MCF 10A (cell line): ENCODE measurements at regions of chrX and their contacts with region 1.

Region 1: GRCh38 chrX:78517124-78517523 is 142.0 kb downstream of the RTL3 start:
- DNase-seq: no peak
- H3K4me3 Mint-ChIP-seq: no peak overlapping the region
- H3K27ac Mint-ChIP-seq: no peak overlapping the region
- H3K4me1 Mint-ChIP-seq: no peaks in the 10 kb centered on the region
- H3K27me3 Mint-ChIP-seq: no peaks in the 10 kb centered on the region
- CTCF ChIP-seq: no peak

Region 2: DNA sequence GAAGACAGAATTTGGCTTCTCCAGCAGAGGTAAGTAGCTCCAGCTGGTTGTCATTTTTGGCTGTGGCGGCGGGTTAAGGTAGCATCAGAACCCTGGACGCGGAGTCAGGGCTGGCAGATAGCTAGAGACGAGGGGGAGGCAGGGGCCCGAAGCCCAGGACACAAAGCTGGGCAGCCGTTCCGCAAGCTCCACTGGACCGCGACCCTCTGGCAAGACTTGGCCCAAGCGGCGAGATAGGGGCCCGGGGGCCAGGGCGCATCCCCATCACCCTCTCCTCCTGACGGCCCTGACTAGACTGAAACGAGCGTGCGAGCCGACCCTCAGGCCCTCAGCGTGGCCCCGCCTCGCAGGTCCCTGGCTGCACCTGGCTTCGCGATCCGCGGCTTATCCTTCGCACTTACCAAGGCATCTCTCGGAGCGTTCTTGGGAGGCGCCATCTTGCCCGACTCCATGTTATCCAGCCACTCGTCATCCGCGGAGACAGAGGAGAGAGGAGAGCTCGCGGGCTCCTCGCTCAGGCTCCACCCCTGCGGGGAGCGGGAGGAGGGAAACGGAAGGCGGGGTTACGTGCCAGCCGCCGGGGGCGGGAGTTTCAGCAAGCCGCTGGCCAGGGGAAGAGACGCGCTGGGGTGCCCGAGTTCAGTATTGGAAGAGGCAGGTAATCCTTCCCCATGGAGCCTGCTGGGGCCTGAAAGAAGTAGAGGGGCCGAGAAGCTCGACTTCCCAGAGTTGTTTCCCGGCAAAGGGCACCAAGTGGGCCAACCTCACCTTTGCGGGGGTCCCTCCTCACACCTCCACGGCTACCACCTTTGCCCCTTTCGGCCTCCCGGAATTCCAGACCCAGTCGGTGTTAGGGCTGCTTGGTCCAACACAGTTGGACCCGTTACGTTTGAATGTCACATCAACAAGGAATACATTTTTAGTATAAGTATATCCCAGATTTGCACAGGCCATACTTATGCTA is 377.7 kb before region 1 on chrX and contains the start of gene TAF9B:
- CTCF ChIA-PET with region 1: no interaction called
- POLR2A ChIA-PET with region 1: interaction called, 3 read pairs
- intact Hi-C with region 1: loop called (anchors 10 kb)
- DNase-seq: peak; percentile 84
- H3K4me3 Mint-ChIP-seq: peak within 1 kb of the TSS; percentile 81
- H3K27ac Mint-ChIP-seq: peak within 1 kb of the TSS; percentile 63
- H3K4me1 Mint-ChIP-seq: no peaks in the 10 kb centered on the region
- H3K27me3 Mint-ChIP-seq: no peaks in the 10 kb centered on the region
- CTCF ChIP-seq: no peak
- total RNA-seq, gene TAF9B: 11.8 and 14.1 TPM in 2 replicates

Region 3: GRCh38 chrX:78532363-78532762 is 15.2 kb after region 1 on chrX:
- CTCF ChIA-PET with region 1: no interaction called
- POLR2A ChIA-PET with region 1: no interaction called
- intact Hi-C with region 1: no loop called
- DNase-seq: no peak
- H3K4me3 Mint-ChIP-seq: no peak overlapping the region
- H3K27ac Mint-ChIP-seq: no peak overlapping the region
- H3K4me1 Mint-ChIP-seq: peaks cover 4% of the 10 kb centered on the region
- H3K27me3 Mint-ChIP-seq: no peaks in the 10 kb centered on the region
- CTCF ChIP-seq: no peak